Activated naive CD4-positive, alpha-beta T cell treated with anti-CD3 and anti-CD28 coated beads for 36 hours (primary cell): ENCODE measurements at regions of chr3 and their contacts with region 1.

Region 1: DNA sequence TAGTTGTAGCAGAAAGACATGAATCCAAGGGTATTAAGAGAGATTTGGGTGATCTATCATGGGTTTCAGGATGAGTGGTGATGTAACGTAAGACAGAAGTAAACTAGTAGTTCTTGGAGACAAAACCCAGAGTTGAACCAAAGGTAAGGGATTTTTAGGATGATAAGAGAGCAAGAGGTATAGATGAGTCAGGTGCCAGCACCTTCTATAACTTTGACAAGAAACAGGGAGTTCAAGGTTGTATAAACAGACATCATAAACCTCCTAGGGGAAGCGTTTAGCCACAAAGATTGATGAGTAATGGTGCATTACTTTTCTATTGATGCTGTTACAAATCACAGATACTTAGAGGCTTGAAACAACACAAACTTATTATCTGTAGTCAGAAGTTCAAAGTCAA is 447.3 kb upstream of the ARHGEF26 start:
- DNase-seq: no peak
- H3K4me3 Mint-ChIP-seq: no peak overlapping the region
- H3K27ac Mint-ChIP-seq: peak overlapping the region; percentile 48
- H3K4me1 Mint-ChIP-seq: peaks cover 11% of the 10 kb centered on the region
- H3K27me3 Mint-ChIP-seq: no peaks in the 10 kb centered on the region

Region 2: GRCh38 chr3:153572654-153573053 is 101.2 kb before region 1 on chr3:
- CTCF ChIA-PET with region 1: no interaction called
- intact Hi-C with region 1: no loop called
- DNase-seq: no peak
- H3K4me3 Mint-ChIP-seq: no peak overlapping the region
- H3K27ac Mint-ChIP-seq: no peak overlapping the region
- H3K4me1 Mint-ChIP-seq: no peaks in the 10 kb centered on the region
- H3K27me3 Mint-ChIP-seq: peaks cover 3% of the 10 kb centered on the region

Region 3: GRCh38 chr3:153640689-153641301 is 33.1 kb before region 1 on chr3:
- CTCF ChIA-PET with region 1: no interaction called
- intact Hi-C with region 1: loop called (anchors 2 kb)
- DNase-seq: no peak
- H3K4me3 Mint-ChIP-seq: no peak overlapping the region
- H3K27ac Mint-ChIP-seq: no peak overlapping the region
- H3K4me1 Mint-ChIP-seq: peaks cover 41% of the 10 kb centered on the region
- H3K27me3 Mint-ChIP-seq: no peaks in the 10 kb centered on the region

Region 4: GRCh38 chr3:153714588-153715290 is 40.9 kb after region 1 on chr3:
- CTCF ChIA-PET with region 1: no interaction called
- intact Hi-C with region 1: no loop called
- DNase-seq: no peak
- H3K4me3 Mint-ChIP-seq: no peak overlapping the region
- H3K27ac Mint-ChIP-seq: peak overlapping the region; percentile 68
- H3K4me1 Mint-ChIP-seq: no peaks in the 10 kb centered on the region
- H3K27me3 Mint-ChIP-seq: no peaks in the 10 kb centered on the region